Transverse colon (tissue), 4 donors: ENCODE measurements at regions of chr1 and their contacts with region 1.

Region 1: GRCh38 chr1:25754470-25755181 is 45.4 kb upstream of the SELENON start:
- DNase-seq: no peak
- H3K4me3 ChIP-seq: no peak overlapping the region
- H3K27ac ChIP-seq: no peak overlapping the region
- H3K4me1 ChIP-seq: no peaks in the 10 kb centered on the region
- H3K27me3 ChIP-seq: no peaks in the 10 kb centered on the region
- CTCF ChIP-seq: no peak
- EP300 ChIP-seq: no peak
- POLR2A ChIP-seq: no peak

Region 2: DNA sequence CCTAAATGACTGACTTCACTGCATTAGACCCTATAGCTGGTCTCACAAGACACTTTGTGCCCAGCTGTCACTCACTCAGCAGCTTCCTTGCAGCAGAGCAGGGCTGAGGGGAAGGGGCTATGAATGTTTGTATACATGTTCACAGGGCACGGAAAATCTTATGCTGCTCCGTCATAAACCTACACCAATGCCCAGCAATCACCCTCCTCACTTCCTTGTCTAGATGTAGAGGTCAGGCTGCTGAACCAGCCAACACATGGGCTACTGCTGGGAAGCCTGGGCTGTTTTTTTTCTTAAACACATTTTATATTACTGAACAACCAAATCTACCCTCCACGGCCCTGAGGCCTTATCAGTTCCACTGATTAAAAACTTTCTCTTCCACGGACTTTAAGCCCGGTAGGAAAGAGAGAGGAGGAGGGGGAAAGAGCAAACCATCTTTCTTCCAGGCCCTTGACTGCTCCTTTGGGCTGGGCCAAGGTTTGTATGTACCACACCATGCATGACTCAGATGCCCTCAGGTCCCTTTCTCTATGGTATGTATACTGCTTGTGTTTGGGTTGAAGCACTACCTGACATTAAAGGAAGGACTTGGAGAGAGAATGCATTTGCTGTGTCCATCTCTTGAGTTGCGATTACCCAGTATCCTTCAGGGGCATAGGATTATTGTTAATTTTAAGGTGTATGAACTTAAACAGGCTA is 77.9 kb after region 1 on chr1:
- in situ Hi-C with region 1: no loop called
- intact Hi-C with region 1: no loop called
- DNase-seq: no peak
- H3K4me3 ChIP-seq: no peak overlapping the region
- H3K27ac ChIP-seq: no peak overlapping the region
- H3K4me1 ChIP-seq: no peaks in the 10 kb centered on the region
- H3K27me3 ChIP-seq: no peaks in the 10 kb centered on the region
- CTCF ChIP-seq: no peak
- EP300 ChIP-seq: no peak
- POLR2A ChIP-seq: no peak

Region 3: DNA sequence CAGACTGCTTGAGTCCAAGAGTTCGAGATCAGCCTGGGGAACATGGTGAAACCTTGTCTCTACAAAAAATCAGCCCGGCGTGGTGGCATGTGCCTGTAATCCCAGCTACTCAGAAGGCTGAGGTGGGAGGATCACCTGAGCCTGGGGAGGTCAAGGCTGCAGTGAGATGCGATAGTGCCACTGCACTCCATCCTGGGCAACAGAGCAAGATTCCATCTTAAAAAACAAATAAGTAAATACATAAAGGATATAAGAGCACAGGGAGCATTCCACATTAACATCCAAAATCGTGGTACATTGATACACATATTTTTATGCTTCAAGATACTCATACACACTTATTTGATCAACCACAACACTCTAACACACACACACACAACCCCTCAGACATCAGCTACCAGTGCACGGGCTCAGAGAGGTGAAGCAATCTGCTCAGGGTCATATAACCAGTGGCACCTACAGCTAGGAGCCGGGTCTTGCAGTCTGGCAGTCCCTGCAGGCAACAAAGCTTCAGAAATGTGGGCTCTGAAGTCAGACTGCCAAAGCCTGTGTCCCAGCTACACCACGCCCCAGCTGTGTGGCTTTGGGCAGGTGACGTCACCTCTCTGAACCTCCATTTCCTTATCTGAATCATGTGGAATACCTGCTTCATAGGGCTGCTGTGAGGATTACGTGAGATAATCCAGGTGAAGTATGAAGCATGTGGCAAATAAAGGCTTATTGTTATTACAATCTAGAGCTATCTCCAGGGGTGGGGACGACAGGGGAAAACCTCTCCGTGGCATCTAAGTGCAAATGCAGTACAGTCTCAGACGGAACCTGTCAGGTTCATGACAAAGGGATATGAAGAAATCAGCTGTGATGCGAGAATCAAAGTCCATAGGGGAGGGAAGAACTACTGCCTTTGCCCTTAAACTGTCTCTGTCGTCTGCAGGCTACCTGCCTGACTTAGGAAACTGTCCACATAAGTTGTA is 604.1 kb after region 1 on chr1:
- in situ Hi-C with region 1: no loop called
- intact Hi-C with region 1: loop called (anchors 5 kb)
- DNase-seq: peak; percentile 83
- H3K4me3 ChIP-seq: no peak overlapping the region
- H3K27ac ChIP-seq: peak overlapping the region; percentile 59 to 76 (median 68)
- H3K4me1 ChIP-seq: peaks cover 11 to 55% (median 43%) of the 10 kb centered on the region in 4 donors
- H3K27me3 ChIP-seq: peaks cover 34% of the 10 kb centered on the region
- CTCF ChIP-seq: peak in 1 of 5 experiments; percentile 14
- EP300 ChIP-seq: no peak
- POLR2A ChIP-seq: peak; percentile 60